ENCODE measurements at regions of chr1 and their contacts with region 1.

Region 1: GRCh38 chr1:116151739-116152576 is 40.8 kb downstream of the MAB21L3 start:
- DNase-seq: peak; percentile 73
- H3K4me3 ChIP-seq: peak overlapping the region; percentile 34 to 49 (median 36)
- H3K27ac ChIP-seq: no peak overlapping the region
- H3K4me1 ChIP-seq: peaks cover 4% of the 10 kb centered on the region
- H3K27me3 ChIP-seq: no peaks in the 10 kb centered on the region
- CTCF ChIP-seq: peak; percentile 65 to 93

Region 2: DNA sequence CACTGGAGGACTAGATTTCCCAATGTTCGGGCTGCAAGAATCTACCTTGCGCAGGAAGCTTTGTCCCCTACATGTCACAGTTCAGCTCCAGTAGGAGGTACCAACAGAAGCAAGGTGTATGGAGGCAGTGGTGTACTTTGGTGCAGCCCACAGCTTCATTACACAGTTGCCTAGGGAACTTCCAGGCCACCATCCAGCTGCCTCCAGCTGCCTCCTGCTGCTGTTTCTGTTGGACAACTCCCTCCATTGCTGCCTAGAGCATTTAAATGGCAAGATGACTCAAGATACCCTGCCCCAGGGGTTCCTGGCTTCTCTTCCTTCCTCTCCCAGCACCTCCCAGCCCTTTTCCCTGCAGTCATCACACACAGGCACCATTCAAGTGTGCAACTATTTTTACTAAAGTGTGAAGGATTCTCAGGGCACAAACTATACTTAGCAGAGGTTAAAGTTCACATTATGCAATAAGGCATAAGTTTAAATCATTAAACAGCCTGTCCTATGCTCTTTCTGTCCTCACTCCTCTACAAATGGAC is 182.1 kb after region 1 on chr1:
- CTCF ChIA-PET with region 1: no interaction called
- dilution Hi-C with region 1: no loop called
- in situ Hi-C with region 1: loop called in 1 of 2 experiments (anchors 25 kb)
- intact Hi-C with region 1: no loop called
- DNase-seq: peak; percentile 72
- H3K4me3 ChIP-seq: no peak overlapping the region
- H3K27ac ChIP-seq: no peak overlapping the region
- H3K4me1 ChIP-seq: peaks cover 8% of the 10 kb centered on the region
- H3K27me3 ChIP-seq: no peaks in the 10 kb centered on the region
- CTCF ChIP-seq: no peak

Region 3: GRCh38 chr1:116360429-116361173 is 208.6 kb after region 1 on chr1:
- CTCF ChIA-PET with region 1: no interaction called
- dilution Hi-C with region 1: no loop called
- in situ Hi-C with region 1: no loop called
- intact Hi-C with region 1: loop called (anchors 2 kb)
- DNase-seq: no peak
- H3K4me3 ChIP-seq: no peak overlapping the region
- H3K27ac ChIP-seq: no peak overlapping the region
- H3K4me1 ChIP-seq: peaks cover 14% of the 10 kb centered on the region
- H3K27me3 ChIP-seq: no peaks in the 10 kb centered on the region
- CTCF ChIP-seq: peak; percentile 32 to 46

Region 4: DNA sequence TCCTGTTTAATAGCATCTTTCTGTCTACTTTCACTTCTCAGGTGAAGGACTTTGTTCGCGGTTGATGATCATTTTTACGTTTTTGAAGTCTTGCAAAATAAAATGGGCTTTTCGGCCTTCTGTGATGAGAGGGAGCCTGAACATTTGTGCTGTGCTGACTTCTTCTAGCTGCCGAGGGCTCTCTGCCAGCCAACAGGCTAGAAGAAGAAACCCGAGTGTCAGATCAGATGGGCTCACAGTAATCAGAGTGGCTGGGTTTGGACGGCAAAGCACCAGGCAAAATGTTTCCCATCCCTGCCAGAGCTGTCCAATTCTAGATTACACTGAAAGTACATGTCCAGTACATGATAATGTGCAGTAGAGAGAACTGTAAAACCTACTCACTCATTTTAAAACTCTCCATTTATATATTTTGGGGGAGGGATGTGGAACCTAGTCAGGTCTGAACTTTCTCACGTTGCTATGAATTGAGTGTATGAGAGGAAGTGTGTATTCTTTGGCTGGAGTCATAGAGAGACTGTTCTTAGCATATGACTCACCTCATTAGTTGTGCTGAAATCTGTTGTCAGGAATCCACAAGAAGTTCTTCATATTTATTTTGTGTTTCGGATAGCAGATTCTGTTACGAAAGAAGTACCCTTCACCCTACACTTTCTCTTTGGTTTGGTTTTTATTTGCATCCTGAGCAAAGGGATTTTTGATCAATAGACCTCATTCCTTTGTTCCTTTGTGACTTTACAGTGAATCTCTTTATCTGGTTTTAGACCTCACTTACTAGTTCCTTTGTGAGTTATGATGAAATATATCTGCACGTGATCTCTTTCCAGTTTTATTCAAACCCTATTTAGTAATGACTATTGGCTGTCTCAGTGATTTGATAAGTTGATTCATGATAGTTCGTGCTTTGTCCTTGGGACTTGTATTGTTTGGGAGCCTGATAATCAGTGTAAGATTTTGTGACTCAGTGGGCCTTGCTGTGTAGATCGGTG is 225.9 kb after region 1 on chr1:
- CTCF ChIA-PET with region 1: no interaction called
- dilution Hi-C with region 1: no loop called
- in situ Hi-C with region 1: no loop called
- intact Hi-C with region 1: loop called (anchors 5 kb)
- DNase-seq: peak; percentile 92
- H3K4me3 ChIP-seq: peak overlapping the region; percentile 23 to 37 (median 31)
- H3K27ac ChIP-seq: peak overlapping the region; percentile 95
- H3K4me1 ChIP-seq: peaks cover 53% of the 10 kb centered on the region
- H3K27me3 ChIP-seq: no peaks in the 10 kb centered on the region
- CTCF ChIP-seq: no peak

Region 5: GRCh38 chr1:116498789-116499628 is 347.1 kb after region 1 on chr1:
- CTCF ChIA-PET with region 1: interaction called, 9 read pairs
- dilution Hi-C with region 1: no loop called
- in situ Hi-C with region 1: no loop called
- intact Hi-C with region 1: loop called (anchors 1 kb)
- DNase-seq: peak; percentile 60
- H3K4me3 ChIP-seq: no peak overlapping the region
- H3K27ac ChIP-seq: no peak overlapping the region
- H3K4me1 ChIP-seq: peaks cover 13% of the 10 kb centered on the region
- H3K27me3 ChIP-seq: no peaks in the 10 kb centered on the region
- CTCF ChIP-seq: peak; percentile 82 to 84

Measured in mammary epithelial cell (primary cell).